ENCODE measurements at regions of chr1 and their contacts with region 1.

Region 1: DNA sequence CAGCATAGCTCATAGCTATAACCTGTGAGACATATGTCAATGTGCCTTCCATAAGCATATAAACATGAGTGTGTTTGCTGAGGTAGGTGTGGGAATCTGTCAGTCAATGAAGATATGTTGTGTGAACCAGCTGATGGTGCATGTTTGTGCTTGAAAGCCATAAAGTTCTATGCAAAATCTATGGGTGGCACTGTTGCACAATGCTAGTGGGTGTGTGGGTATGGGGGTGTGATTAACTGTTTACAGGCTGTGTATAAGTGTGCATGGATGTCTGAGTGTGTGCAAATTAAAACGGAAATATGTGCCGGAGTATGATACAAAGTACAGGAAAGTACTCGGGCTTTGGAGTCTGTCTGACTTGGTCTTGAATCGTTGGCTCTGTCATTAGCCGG is 1.0 kb upstream of the ATP2B4 start:
- DNase-seq: peak; percentile 86 to 95 (median 91)
- H3K4me3 ChIP-seq: peak overlapping the region in 5 of 7 experiments; percentile 9 to 98 (median 88)
- H3K27ac ChIP-seq: peak overlapping the region; percentile 80 to 91
- H3K4me1 ChIP-seq: peaks cover 7 to 77% (median 58%) of the 10 kb centered on the region in 4 experiments
- H3K27me3 ChIP-seq: no peaks in the 10 kb centered on the region

Region 2: DNA sequence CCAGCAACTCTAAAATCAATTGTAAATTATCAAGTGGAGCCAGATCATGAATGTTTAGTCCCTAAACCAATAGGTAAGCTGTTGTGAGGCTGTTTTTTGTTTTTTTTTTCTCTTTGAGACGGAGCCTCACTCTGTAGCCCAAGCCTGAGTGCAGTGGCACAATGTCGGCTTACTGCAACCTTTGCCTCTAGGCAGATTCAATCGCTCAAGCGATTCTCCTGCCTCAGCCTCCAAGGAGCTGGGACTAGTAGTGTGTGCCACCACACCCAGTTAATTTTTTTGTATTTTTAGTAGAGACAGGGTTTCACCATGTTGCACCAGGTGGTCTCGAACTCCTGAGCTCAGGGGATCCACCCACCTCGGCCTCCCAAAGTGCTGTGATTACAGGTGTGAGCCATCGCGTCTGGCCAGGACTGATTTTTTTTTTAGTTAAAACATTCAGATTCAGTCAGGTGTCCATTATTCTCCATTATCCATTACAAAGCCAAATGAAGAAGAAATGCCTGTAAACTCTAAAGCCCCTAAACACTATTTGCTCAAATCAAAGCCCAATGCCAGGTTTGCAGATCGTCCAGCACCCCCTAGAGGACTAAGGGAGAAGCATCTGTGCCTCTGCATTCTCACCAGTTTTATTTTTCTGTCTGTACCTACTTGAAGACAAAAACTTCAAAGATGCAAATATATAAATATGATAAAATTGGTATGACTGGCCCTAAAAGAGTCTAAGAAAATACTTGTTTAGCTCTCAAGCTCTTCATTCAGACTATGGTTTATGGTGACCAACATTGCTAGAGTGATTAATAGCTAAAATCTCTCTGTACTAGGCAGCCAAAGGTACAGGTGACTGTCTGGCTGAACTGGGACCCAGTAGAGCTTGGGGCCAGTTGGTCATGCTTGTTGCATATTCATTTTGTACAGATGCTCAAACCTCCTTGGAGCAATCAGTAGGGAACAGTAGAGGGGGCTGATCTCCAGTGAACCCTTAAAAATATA is 1054.0 kb before region 1 on chr1:
- CTCF ChIA-PET with region 1: no interaction called
- POLR2A ChIA-PET with region 1: no interaction called
- DNase-seq: peak; percentile 30 to 64 (median 61)
- H3K4me3 ChIP-seq: no peak overlapping the region
- H3K27ac ChIP-seq: no peak overlapping the region
- H3K4me1 ChIP-seq: no peaks in the 10 kb centered on the region
- H3K27me3 ChIP-seq: no peaks in the 10 kb centered on the region

Region 3: GRCh38 chr1:203504397-203505250 is 121.0 kb before region 1 on chr1:
- CTCF ChIA-PET with region 1: interaction called, 18 read pairs
- POLR2A ChIA-PET with region 1: no interaction called
- DNase-seq: peak; percentile 65 to 82 (median 72)
- H3K4me3 ChIP-seq: no peak overlapping the region
- H3K27ac ChIP-seq: no peak overlapping the region
- H3K4me1 ChIP-seq: no peaks in the 10 kb centered on the region
- H3K27me3 ChIP-seq: peaks cover 0 to 9% (median 3%) of the 10 kb centered on the region in 5 experiments

Region 4: GRCh38 chr1:203600782-203601736 is 24.6 kb before region 1 on chr1:
- CTCF ChIA-PET with region 1: interaction called, 21 read pairs
- POLR2A ChIA-PET with region 1: no interaction called
- DNase-seq: no peak
- H3K4me3 ChIP-seq: no peak overlapping the region
- H3K27ac ChIP-seq: no peak overlapping the region
- H3K4me1 ChIP-seq: peaks cover 0 to 6% (median under 1%) of the 10 kb centered on the region in 4 experiments
- H3K27me3 ChIP-seq: no peaks in the 10 kb centered on the region

Region 5: DNA sequence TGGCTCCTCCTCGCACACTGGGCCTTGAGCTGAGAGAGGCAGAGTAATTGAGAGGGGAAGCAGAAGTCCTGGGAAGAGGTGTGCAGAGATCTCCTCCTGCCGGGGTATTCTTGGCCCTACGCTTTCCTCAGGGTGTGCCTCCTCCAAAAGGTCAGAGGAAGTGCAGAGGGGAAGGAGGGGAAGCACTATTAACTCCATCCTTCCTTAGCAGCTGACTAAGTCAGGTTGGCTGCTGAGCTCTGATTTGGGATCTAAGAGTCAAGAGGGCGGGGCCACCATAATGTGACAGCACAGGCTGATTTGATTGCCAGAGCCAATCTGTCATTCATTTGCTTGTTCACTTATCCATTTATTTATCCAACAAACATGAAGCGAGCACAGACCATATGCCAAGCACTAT is 13.3 kb after region 1 on chr1:
- CTCF ChIA-PET with region 1: interaction called, 24 read pairs
- POLR2A ChIA-PET with region 1: interaction called, 7 read pairs
- DNase-seq: peak; percentile 31 to 39 (median 36)
- H3K4me3 ChIP-seq: no peak overlapping the region
- H3K27ac ChIP-seq: no peak overlapping the region
- H3K4me1 ChIP-seq: peaks cover 4 to 24% (median 18%) of the 10 kb centered on the region in 4 experiments
- H3K27me3 ChIP-seq: no peaks in the 10 kb centered on the region

Region 6: GRCh38 chr1:203673550-203674427 is 48.2 kb after region 1 on chr1:
- CTCF ChIA-PET with region 1: interaction called, 14 read pairs
- POLR2A ChIA-PET with region 1: interaction called, 15 read pairs
- DNase-seq: peak; percentile 99 to 100 (median 100)
- H3K4me3 ChIP-seq: peak overlapping the region in 5 of 7 experiments; percentile 24 to 64 (median 39)
- H3K27ac ChIP-seq: peak overlapping the region; percentile 77 to 93
- H3K4me1 ChIP-seq: peaks cover 16 to 78% (median 59%) of the 10 kb centered on the region in 4 experiments
- H3K27me3 ChIP-seq: no peaks in the 10 kb centered on the region

Region 7: GRCh38 chr1:203702130-203702577 is 76.5 kb after region 1 on chr1:
- CTCF ChIA-PET with region 1: interaction called, 85 read pairs
- POLR2A ChIA-PET with region 1: interaction called, 5 read pairs
- DNase-seq: peak; percentile 66 to 80 (median 68)
- H3K4me3 ChIP-seq: no peak overlapping the region
- H3K27ac ChIP-seq: no peak overlapping the region
- H3K4me1 ChIP-seq: peaks cover 9 to 39% (median 24%) of the 10 kb centered on the region in 4 experiments
- H3K27me3 ChIP-seq: no peaks in the 10 kb centered on the region